ENCODE measurements at regions of chr17 and their contacts with region 1.

Region 1: GRCh38 chr17:7021993-7022778 is 664 bp upstream of the BCL6B start:
- DNase-seq: peak; percentile 74 to 95 (median 95)
- H3K4me3 ChIP-seq: peak overlapping the region; percentile 2 to 74 (median 45)
- H3K27ac ChIP-seq: peak overlapping the region in 1 of 2 experiments; percentile 25
- H3K4me1 ChIP-seq: peaks cover 3 to 58% (median 41%) of the 10 kb centered on the region in 4 experiments
- H3K27me3 ChIP-seq: peaks cover 0 to 3% (median 0%) of the 10 kb centered on the region in 5 experiments

Region 2: GRCh38 chr17:7004398-7005253 is 17.6 kb before region 1 on chr17:
- CTCF ChIA-PET with region 1: interaction called, 76 read pairs
- POLR2A ChIA-PET with region 1: interaction called, 5 read pairs
- DNase-seq: peak; percentile 64 to 84 (median 83)
- H3K4me3 ChIP-seq: no peak overlapping the region
- H3K27ac ChIP-seq: no peak overlapping the region
- H3K4me1 ChIP-seq: no peaks in the 10 kb centered on the region
- H3K27me3 ChIP-seq: no peaks in the 10 kb centered on the region

Region 3: GRCh38 chr17:7011942-7012254 is 10.3 kb before region 1 on chr17:
- CTCF ChIA-PET with region 1: interaction called, 76 read pairs
- POLR2A ChIA-PET with region 1: interaction called, 16 read pairs
- DNase-seq: no peak
- H3K4me3 ChIP-seq: peak overlapping the region; percentile 81 to 100 (median 95)
- H3K27ac ChIP-seq: peak overlapping the region; percentile 99 to 100
- H3K4me1 ChIP-seq: peaks cover 24 to 55% (median 48%) of the 10 kb centered on the region in 4 experiments
- H3K27me3 ChIP-seq: no peaks in the 10 kb centered on the region

Region 4: GRCh38 chr17:7035591-7036368 is 13.6 kb after region 1 on chr17 and contains the start of gene SLC16A13:
- CTCF ChIA-PET with region 1: interaction called, 37 read pairs
- POLR2A ChIA-PET with region 1: interaction called, 17 read pairs
- DNase-seq: peak; percentile 95 to 98 (median 97)
- H3K4me3 ChIP-seq: peak within 1 kb of the TSS; percentile 59 to 89 (median 76)
- H3K27ac ChIP-seq: peak within 1 kb of the TSS; percentile 87 to 95
- H3K4me1 ChIP-seq: peaks cover 6 to 33% (median 26%) of the 10 kb centered on the region in 4 experiments
- H3K27me3 ChIP-seq: no peaks in the 10 kb centered on the region